Motor neuron (in vitro differentiated cells): ENCODE measurements at regions of chr4 and their contacts with region 1.

Region 1: GRCh38 chr4:110005461-110006056 is 92.9 kb downstream of the EGF start:
- ATAC-seq: peak in 6 of 8 experiments; percentile 31 to 82 (median 55)
- H3K4me3 ChIP-seq: no peak overlapping the region
- H3K27ac ChIP-seq: no peak overlapping the region
- H3K4me1 ChIP-seq: peaks cover 2 to 6% of the 10 kb centered on the region in 2 donors

Region 2: GRCh38 chr4:110087070-110087708 is 81.6 kb after region 1 on chr4:
- in situ Hi-C with region 1: no loop called
- ATAC-seq: peak; percentile 32 to 90 (median 66)
- H3K4me3 ChIP-seq: no peak overlapping the region
- H3K27ac ChIP-seq: no peak overlapping the region
- H3K4me1 ChIP-seq: peaks cover 22 to 32% of the 10 kb centered on the region in 2 donors

Region 3: GRCh38 chr4:110211007-110211769 is 205.6 kb after region 1 on chr4:
- in situ Hi-C with region 1: loop called in 1 of 9 experiments (anchors 25 kb)
- ATAC-seq: peak in 3 of 8 experiments; percentile 18 to 45 (median 33)
- H3K4me3 ChIP-seq: no peak overlapping the region
- H3K27ac ChIP-seq: no peak overlapping the region
- H3K4me1 ChIP-seq: no peaks in the 10 kb centered on the region

Region 4: DNA sequence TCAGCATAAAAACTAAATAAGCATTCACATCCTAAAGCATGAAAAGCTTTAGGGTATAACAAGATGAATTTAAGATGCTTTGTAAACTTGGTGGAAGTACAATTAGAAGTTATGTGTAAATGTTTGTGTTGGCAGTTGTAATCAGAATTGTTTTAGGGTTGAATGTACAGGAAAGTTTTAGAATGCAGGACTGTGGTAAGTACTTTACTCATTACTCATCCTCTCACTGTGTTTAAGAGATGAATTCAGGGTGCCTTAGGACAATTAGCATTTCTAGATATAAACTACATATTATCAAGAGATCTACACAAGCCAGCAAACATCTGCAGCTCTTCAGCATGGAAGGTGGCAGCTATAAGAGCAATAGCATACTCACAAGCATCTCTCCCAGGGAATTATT is 270.3 kb after region 1 on chr4:
- in situ Hi-C with region 1: no loop called
- ATAC-seq: peak in 1 of 8 experiments; percentile 48
- H3K4me3 ChIP-seq: no peak overlapping the region
- H3K27ac ChIP-seq: no peak overlapping the region
- H3K4me1 ChIP-seq: peaks cover 0 to 8% of the 10 kb centered on the region in 2 donors

Region 5: GRCh38 chr4:110344162-110344561 is 338.6 kb after region 1 on chr4:
- in situ Hi-C with region 1: loop called in 1 of 9 experiments (anchors 25 kb)
- ATAC-seq: peak in 3 of 8 experiments; percentile 63 to 76 (median 72)
- H3K4me3 ChIP-seq: no peak overlapping the region
- H3K27ac ChIP-seq: no peak overlapping the region
- H3K4me1 ChIP-seq: peaks cover 3 to 23% of the 10 kb centered on the region in 2 donors

Region 6: GRCh38 chr4:110516106-110516922 is 510.8 kb after region 1 on chr4:
- in situ Hi-C with region 1: loop called in 8 of 9 experiments (anchors 10 to 25 kb)
- ATAC-seq: peak in 4 of 8 experiments; percentile 58 to 97 (median 84)
- H3K4me3 ChIP-seq: no peak overlapping the region
- H3K27ac ChIP-seq: no peak overlapping the region
- H3K4me1 ChIP-seq: no peaks in the 10 kb centered on the region

Region 7: GRCh38 chr4:111641955-111642579 is 1636.5 kb after region 1 on chr4:
- in situ Hi-C with region 1: loop called in 1 of 9 experiments (anchors 25 kb)
- ATAC-seq: peak; percentile 40 to 93 (median 75)
- H3K4me3 ChIP-seq: no peak overlapping the region
- H3K27ac ChIP-seq: no peak overlapping the region
- H3K4me1 ChIP-seq: no peaks in the 10 kb centered on the region